GM12878 (cell line): ENCODE measurements at regions of chr1 and their contacts with region 1.

Region 1: DNA sequence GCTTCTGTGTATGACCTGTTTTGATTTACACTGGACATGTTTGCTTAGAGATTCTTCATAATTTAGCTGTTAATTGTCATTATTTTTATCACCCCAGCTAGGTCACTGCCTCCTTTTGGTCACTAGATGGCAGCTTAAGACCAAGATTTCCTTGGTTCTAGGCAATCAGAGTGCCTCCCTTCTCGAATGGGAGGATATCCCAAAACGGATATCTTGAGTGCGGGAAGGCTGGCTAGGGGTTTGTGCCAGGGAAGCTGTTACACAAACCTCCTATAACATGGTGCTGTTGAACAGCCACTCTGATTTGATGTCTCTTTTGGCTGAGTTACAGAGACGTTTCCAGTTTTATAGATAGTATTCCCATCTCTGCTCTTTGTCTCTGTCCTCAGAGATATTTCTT is 283.5 kb downstream of the S1PR1 start:
- DNase-seq: peak; percentile 20
- ATAC-seq: peak; percentile 96
- H3K4me3 ChIP-seq: no peak overlapping the region
- H3K27ac ChIP-seq: no peak overlapping the region
- H3K4me1 ChIP-seq: no peaks in the 10 kb centered on the region
- H3K27me3 ChIP-seq: no peaks in the 10 kb centered on the region
- CTCF ChIP-seq: peak; percentile 79 to 89 (median 83)
- EP300 ChIP-seq: no peak
- POLR2A ChIP-seq: no peak
- RAD21 ChIP-seq: peak; percentile 87

Region 2: GRCh38 chr1:101506541-101507164 is 13.6 kb before region 1 on chr1:
- CTCF ChIA-PET with region 1: interaction called, 87 read pairs
- POLR2A ChIA-PET with region 1: no interaction called
- RAD21 ChIA-PET with region 1: interaction called, 8 read pairs
- SMC1A ChIA-PET with region 1: interaction called, 16 read pairs
- in situ Hi-C with region 1: no loop called
- intact Hi-C with region 1: no loop called
- DNase-seq: peak; percentile 21
- ATAC-seq: peak; percentile 93
- H3K4me3 ChIP-seq: no peak overlapping the region
- H3K27ac ChIP-seq: no peak overlapping the region
- H3K4me1 ChIP-seq: no peaks in the 10 kb centered on the region
- H3K27me3 ChIP-seq: no peaks in the 10 kb centered on the region
- CTCF ChIP-seq: peak; percentile 61 to 77 (median 68)
- EP300 ChIP-seq: no peak
- POLR2A ChIP-seq: no peak
- RAD21 ChIP-seq: peak; percentile 53; the same call in 1 of the 2 replicates

Region 3: GRCh38 chr1:101567582-101568189 is 47.4 kb after region 1 on chr1:
- CTCF ChIA-PET with region 1: interaction called, 84 read pairs
- POLR2A ChIA-PET with region 1: no interaction called
- RAD21 ChIA-PET with region 1: interaction called, 9 read pairs
- SMC1A ChIA-PET with region 1: interaction called, 15 read pairs
- in situ Hi-C with region 1: no loop called
- intact Hi-C with region 1: loop called (anchors 1 kb)
- DNase-seq: no peak
- ATAC-seq: peak; percentile 96
- H3K4me3 ChIP-seq: no peak overlapping the region
- H3K27ac ChIP-seq: no peak overlapping the region
- H3K4me1 ChIP-seq: no peaks in the 10 kb centered on the region
- H3K27me3 ChIP-seq: no peaks in the 10 kb centered on the region
- CTCF ChIP-seq: peak; percentile 75 to 98 (median 97)
- EP300 ChIP-seq: no peak
- POLR2A ChIP-seq: no peak
- RAD21 ChIP-seq: peak; percentile 69

Region 4: DNA sequence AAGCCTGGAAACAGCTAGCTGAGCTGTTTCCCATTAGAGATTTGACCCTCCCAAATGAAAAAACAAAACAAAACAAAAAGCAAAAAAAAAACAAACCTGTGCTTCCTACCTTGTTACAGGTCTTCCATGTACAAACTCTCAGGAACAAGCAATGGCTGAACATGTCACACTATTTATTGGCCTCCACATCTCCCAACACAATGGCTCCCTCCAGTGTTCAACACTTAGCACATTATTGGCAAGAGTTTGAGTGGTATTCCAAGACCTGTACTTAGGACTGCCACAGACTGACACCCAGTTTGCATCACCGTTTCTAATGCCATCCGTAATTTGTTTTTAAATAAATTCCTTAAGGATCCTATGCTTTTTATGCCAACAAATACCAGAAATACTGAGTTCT is 671.4 kb after region 1 on chr1:
- CTCF ChIA-PET with region 1: interaction called, 7 read pairs
- POLR2A ChIA-PET with region 1: no interaction called
- RAD21 ChIA-PET with region 1: no interaction called
- SMC1A ChIA-PET with region 1: interaction called, 3 read pairs
- in situ Hi-C with region 1: loop called (anchors 25 kb)
- intact Hi-C with region 1: loop called (anchors 2 kb)
- DNase-seq: peak; percentile 7
- ATAC-seq: peak; percentile 79
- H3K4me3 ChIP-seq: no peak overlapping the region
- H3K27ac ChIP-seq: no peak overlapping the region
- H3K4me1 ChIP-seq: no peaks in the 10 kb centered on the region
- H3K27me3 ChIP-seq: no peaks in the 10 kb centered on the region
- CTCF ChIP-seq: peak; percentile 18 to 58 (median 32); a peak in 3 of 6 replicates
- EP300 ChIP-seq: no peak
- POLR2A ChIP-seq: no peak
- RAD21 ChIP-seq: peak; percentile 63

Region 5: DNA sequence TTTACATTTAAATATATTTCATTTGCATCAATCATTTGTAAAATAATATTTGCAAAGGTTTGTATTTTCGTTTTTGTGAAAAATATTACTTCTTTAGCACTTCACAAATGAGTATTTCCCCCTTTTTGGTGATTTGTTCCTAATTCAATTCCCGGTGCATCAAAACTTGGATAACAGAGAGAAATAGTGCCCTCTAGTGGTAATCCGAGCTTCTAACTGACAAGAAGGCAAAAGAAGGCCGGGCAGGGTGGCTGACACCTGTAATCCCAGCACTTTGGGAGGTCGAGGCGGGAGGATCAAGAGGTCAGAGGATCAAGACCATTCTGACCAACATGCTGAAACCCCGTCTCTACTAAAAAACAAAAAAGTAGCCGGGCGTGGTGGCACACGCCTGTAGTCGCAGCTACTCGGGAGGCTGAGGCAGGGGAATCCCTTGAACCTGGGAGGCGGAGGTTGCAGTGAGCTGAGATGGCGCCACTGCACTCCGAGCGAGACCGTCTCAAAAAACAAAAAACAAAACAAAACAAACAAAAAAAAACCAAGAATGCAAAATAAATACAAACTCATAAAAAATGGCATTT is 1450.3 kb after region 1 on chr1:
- CTCF ChIA-PET with region 1: interaction called, 23 read pairs
- POLR2A ChIA-PET with region 1: no interaction called
- RAD21 ChIA-PET with region 1: interaction called, 5 read pairs
- SMC1A ChIA-PET with region 1: interaction called, 8 read pairs
- in situ Hi-C with region 1: loop called (anchors 25 kb)
- intact Hi-C with region 1: loop called (anchors 10 kb)
- DNase-seq: no peak
- ATAC-seq: peak; percentile 61
- H3K4me3 ChIP-seq: no peak overlapping the region
- H3K27ac ChIP-seq: no peak overlapping the region
- H3K4me1 ChIP-seq: no peaks in the 10 kb centered on the region
- H3K27me3 ChIP-seq: no peaks in the 10 kb centered on the region
- CTCF ChIP-seq: peak; percentile 50 to 56 (median 52)
- EP300 ChIP-seq: no peak
- POLR2A ChIP-seq: no peak
- RAD21 ChIP-seq: peak; percentile 68